AG04450 (cell line): ENCODE measurements at regions of chr16 and their contacts with region 1.

Region 1: GRCh38 chr16:81366316-81366932 is 51.7 kb downstream of the GAN start:
- DNase-seq: peak; percentile 13
- H3K4me3 ChIP-seq: no peak overlapping the region
- H3K27ac ChIP-seq: no peak overlapping the region
- H3K27me3 ChIP-seq: no peaks in the 10 kb centered on the region
- CTCF ChIP-seq: peak; percentile 68

Region 2: GRCh38 chr16:81223391-81223829 is 143.0 kb before region 1 on chr16:
- CTCF ChIA-PET with region 1: no interaction called
- POLR2A ChIA-PET with region 1: no interaction called
- DNase-seq: no peak
- H3K4me3 ChIP-seq: no peak overlapping the region
- H3K27ac ChIP-seq: no peak overlapping the region
- H3K27me3 ChIP-seq: peaks cover 16% of the 10 kb centered on the region
- CTCF ChIP-seq: no peak

Region 3: GRCh38 chr16:81723098-81723723 is 356.8 kb after region 1 on chr16:
- CTCF ChIA-PET with region 1: interaction called, 28 read pairs
- POLR2A ChIA-PET with region 1: no interaction called
- DNase-seq: no peak
- H3K4me3 ChIP-seq: no peak overlapping the region
- H3K27ac ChIP-seq: no peak overlapping the region
- H3K27me3 ChIP-seq: peaks cover 18% of the 10 kb centered on the region
- CTCF ChIP-seq: peak; percentile 71

Region 4: GRCh38 chr16:81737885-81738786 is 371.7 kb after region 1 on chr16:
- CTCF ChIA-PET with region 1: interaction called, 21 read pairs
- POLR2A ChIA-PET with region 1: no interaction called
- DNase-seq: no peak
- H3K4me3 ChIP-seq: peak overlapping the region; percentile 27; the same call in 1 of the 2 replicates
- H3K27ac ChIP-seq: no peak overlapping the region
- H3K27me3 ChIP-seq: peaks cover 10% of the 10 kb centered on the region
- CTCF ChIP-seq: peak; percentile 84

Region 5: DNA sequence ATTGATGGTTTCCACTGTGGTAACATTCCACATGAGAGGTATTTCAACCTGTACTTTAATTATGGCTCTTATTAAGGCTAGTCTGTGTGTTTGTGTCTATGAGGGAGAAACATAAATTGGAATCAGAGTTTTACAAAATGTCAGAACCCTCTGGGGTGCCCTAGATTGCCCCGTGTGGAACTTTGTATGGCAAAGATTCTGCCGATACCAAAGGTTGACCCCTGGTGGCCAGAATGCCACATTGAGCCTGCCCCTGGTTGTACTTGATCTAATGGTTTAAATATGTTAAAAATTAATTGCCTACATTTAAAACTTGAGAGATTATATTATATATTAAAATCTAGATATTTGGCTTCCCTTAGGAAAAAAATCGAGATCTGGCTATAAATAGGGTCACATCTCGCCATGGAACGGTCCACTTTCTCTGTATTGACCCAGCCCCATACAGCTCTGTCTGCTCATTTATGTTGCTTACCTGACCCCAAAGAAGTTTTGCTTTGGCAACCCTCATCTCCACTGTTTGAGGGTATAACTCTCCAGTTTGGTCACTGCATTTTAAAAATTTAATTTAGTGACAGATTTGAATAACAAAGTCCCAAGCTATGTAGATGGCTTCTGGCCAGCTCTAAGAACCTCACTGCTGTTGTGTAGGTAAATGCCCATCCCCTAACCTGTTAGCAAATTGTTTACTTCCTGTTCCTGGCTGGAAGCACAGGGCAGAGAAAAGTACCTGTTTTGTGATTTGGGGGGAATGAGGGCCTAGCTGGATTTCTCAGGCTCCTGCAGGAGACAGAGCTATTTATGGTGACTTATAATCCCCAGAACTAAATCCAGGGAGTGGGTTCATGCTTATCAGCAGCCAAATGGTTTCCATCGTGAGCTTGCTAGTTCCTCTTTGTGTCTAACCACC is 507.7 kb after region 1 on chr16:
- CTCF ChIA-PET with region 1: interaction called, 10 read pairs
- POLR2A ChIA-PET with region 1: no interaction called
- DNase-seq: no peak
- H3K4me3 ChIP-seq: no peak overlapping the region
- H3K27ac ChIP-seq: no peak overlapping the region
- H3K27me3 ChIP-seq: no peaks in the 10 kb centered on the region
- CTCF ChIP-seq: peak; percentile 76